Activated CD4-positive, alpha-beta memory T cell treated with anti-CD3 and anti-CD28 coated beads for 36 hours (primary cell): ENCODE measurements at regions of chr14 and their contacts with region 1.

Region 1: DNA sequence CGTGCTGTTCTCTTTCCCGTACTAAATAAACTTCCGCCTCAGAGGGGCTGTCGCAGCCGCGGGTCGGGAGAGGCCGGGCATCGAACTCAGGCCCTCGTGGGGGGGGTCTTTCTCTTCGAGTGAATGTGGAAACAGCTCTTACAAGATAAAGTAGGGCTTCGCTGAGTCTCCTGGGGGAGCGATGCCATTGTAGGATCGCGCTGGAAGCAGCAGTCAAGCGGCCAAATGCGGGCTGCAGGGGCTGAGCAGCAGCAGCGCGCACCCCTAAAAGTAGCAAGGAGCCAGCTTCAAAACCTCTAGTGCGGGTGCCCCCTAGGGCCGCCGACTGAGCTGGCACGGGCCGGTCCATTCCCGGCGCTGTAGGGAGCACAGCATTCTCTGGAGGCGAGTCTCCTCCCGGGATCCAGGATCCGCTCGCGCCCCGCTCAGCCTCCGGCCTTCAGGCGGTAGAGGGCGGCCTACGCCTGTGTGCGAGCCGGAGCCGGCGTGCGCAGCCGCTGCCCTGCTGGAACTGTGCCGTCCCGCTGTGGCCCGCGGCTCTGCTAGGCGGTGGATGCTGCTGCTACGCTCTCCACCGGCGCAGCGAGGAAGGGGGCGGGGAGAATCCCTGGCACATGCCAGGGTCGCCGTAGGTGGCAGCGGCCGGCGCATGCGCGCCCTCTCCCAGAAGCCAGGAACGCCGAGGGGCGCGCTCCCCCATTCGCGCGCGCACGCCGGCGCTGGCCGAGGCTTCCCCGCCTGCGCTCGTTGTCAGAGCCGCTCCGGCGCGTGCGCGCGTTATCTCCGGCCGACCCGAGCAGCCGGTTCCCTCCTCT is at the start of gene FUT8:
- DNase-seq: peak; percentile 96
- H3K4me3 Mint-ChIP-seq: peak within 1 kb of the TSS; percentile 98
- H3K27ac Mint-ChIP-seq: peak within 1 kb of the TSS; percentile 96
- H3K4me1 Mint-ChIP-seq: peaks cover 34% of the 10 kb centered on the region
- H3K27me3 Mint-ChIP-seq: no peaks in the 10 kb centered on the region
- total RNA-seq, gene FUT8: 50.7 to 51.4 TPM

Region 2: DNA sequence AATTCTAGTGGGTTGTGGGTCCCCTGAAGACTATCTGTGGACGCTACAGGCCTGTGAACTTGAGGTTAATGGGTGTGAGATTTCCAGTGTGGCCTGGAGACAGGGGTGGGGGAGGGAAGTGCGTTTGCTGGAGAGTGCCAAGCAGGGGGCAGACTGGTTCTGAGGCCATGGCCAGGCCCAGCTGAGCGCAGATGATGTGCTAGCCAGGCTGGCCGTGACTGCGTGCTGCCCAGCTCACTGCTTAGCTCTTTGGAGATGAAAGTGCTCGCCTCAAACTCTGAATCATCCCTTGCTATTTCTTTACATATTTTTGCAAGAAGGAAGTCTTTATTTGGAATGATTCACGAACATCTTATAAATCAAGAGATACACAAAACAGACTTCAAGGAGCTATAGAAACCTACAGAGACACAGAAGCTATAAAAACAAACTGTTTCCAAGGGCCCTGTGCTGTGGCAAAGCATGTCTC is 783.3 kb before region 1 on chr14:
- CTCF ChIA-PET with region 1: no interaction called
- POLR2A ChIA-PET with region 1: no interaction called
- intact Hi-C with region 1: no loop called
- DNase-seq: no peak
- H3K4me3 Mint-ChIP-seq: no peak overlapping the region
- H3K27ac Mint-ChIP-seq: no peak overlapping the region
- H3K4me1 Mint-ChIP-seq: no peaks in the 10 kb centered on the region
- H3K27me3 Mint-ChIP-seq: no peaks in the 10 kb centered on the region

Region 3: DNA sequence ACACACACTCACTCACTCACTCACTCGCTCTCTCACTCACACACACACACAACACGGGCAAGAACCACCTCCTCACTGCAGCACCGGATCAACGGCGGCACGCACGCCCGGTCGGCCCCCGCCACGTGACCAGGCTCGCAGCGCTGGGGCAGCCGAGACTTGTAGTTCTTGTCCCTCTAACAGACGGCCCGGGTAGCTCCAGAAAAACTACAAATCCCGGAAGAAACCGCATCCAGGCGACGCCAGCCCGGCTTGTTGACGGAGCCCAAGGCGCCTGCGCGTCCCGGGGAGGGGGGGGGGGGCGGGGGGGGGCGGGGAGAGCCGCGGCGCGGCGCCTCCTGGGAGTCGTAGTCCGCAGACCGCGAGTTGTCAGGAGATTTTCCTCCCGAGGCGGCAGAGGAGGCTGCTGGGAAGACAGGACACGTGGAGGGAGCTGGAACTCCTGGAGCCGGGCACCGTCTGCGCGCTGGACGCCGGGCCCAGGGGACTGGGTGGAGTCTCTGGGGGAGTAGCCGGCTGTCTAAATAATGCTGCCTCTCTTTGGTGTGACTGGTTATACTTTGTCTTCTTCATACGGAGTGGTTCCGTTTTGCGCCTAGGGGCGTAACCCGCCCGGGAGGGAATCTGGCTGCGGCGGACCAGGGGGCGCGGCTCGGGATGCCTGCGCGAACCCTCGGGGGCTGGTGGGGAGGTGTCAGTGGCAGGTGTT is 309.6 kb before region 1 on chr14 and contains the start of gene MAX:
- CTCF ChIA-PET with region 1: interaction called, 3 read pairs
- POLR2A ChIA-PET with region 1: no interaction called
- intact Hi-C with region 1: loop called (anchors 1 kb)
- DNase-seq: peak; percentile 99
- H3K4me3 Mint-ChIP-seq: peak within 1 kb of the TSS; percentile 96
- H3K27ac Mint-ChIP-seq: peak within 1 kb of the TSS; percentile 93
- H3K4me1 Mint-ChIP-seq: peaks cover 34% of the 10 kb centered on the region
- H3K27me3 Mint-ChIP-seq: no peaks in the 10 kb centered on the region
- total RNA-seq, gene MAX: 74.5 to 80.7 TPM

Region 4: DNA sequence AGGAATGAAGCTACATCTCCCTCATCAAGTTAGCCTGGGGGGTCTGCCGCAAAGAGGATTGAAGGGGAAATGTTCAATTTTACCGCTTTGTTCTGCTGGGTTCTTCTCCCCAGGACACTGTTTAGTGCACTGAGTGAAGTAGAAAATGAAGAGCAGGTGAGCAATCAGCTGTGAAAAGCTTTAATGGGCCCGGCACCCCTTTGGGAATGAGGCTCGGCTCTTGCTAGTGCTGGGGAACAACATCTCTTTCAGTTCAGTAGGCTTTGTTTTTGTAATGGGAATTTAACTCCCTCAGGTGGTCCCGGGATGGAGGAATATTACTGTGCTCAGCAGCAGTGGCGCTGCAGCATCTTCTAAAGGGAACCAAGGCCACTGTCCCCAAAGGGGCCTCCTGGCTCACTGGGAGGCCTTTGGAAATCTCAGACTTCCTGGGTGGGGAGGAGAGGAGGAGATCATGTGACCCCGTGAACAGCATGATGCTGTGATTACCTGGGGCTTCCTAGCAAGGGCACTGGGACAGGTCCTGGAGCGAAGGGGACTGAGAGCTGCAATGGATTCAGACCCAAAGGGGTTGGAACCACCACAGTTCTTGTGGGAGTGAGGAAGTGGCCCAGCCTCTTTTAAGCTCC is 224.7 kb before region 1 on chr14:
- CTCF ChIA-PET with region 1: no interaction called
- POLR2A ChIA-PET with region 1: no interaction called
- intact Hi-C with region 1: no loop called
- DNase-seq: no peak
- H3K4me3 Mint-ChIP-seq: no peak overlapping the region
- H3K27ac Mint-ChIP-seq: no peak overlapping the region
- H3K4me1 Mint-ChIP-seq: peaks cover 2% of the 10 kb centered on the region
- H3K27me3 Mint-ChIP-seq: peaks cover 4% of the 10 kb centered on the region

Region 5: DNA sequence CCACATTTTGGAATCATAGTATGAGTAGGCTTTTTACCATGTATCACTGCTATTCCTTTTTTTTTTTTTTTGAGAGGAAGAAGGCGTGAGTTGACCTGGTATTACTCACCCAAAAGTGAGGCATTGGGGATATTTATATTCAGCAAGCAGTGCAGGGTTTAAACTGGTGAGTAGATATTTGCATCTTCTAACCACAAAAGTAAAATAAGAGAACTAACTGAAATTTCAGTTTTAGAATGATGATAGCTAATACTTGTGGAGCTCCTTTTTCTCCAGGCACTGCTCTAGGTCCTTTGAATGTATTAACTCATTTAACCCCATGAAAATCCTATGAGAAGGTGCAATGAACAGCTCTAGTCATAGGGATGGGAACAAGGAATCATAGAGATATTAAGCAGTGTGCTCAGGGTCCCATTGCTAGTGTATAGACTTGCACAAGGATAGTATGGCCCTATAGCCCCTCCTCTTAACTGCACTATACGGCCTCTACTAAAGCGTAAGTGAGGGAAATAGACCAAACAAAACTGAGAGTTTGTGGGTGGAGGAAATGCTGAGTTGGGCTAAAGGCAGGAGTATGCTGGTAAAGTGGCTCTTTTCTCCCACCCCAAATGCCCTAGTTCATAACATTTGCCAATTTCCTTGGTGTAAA is 205.7 kb before region 1 on chr14:
- CTCF ChIA-PET with region 1: interaction called, 5 read pairs
- POLR2A ChIA-PET with region 1: interaction called, 4 read pairs
- intact Hi-C with region 1: loop called (anchors 1 kb)
- DNase-seq: peak; percentile 35
- H3K4me3 Mint-ChIP-seq: peak overlapping the region; percentile 54
- H3K27ac Mint-ChIP-seq: peak overlapping the region; percentile 82
- H3K4me1 Mint-ChIP-seq: peaks cover 61% of the 10 kb centered on the region
- H3K27me3 Mint-ChIP-seq: peaks cover 2% of the 10 kb centered on the region

Region 6: GRCh38 chr14:65302571-65303189 is 109.6 kb before region 1 on chr14:
- CTCF ChIA-PET with region 1: no interaction called
- POLR2A ChIA-PET with region 1: no interaction called
- intact Hi-C with region 1: loop called (anchors 5 kb)
- DNase-seq: peak; percentile 87
- H3K4me3 Mint-ChIP-seq: peak overlapping the region; percentile 40
- H3K27ac Mint-ChIP-seq: peak overlapping the region; percentile 87
- H3K4me1 Mint-ChIP-seq: peaks cover 45% of the 10 kb centered on the region
- H3K27me3 Mint-ChIP-seq: no peaks in the 10 kb centered on the region

Region 7: DNA sequence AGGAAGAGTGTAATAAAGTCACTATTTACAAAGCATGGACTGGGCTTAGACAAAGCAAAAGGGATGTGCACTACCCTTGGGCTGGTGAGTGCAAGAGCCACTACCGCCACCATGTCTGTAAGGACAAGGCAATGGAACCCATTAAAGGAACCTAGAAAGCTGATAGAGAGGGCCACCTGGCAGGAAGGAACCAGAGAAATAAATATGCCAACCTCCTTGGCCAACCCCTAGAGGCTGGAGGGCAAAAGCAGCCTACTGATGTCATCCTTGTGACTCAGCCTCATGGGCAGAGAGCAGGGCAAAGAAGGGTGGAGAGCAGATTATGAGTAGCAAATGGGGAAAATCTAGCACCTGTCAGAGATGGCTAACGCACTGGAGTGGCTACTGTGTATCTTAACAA is 59.2 kb before region 1 on chr14:
- CTCF ChIA-PET with region 1: no interaction called
- POLR2A ChIA-PET with region 1: no interaction called
- intact Hi-C with region 1: no loop called
- DNase-seq: peak; percentile 44
- H3K4me3 Mint-ChIP-seq: no peak overlapping the region
- H3K27ac Mint-ChIP-seq: no peak overlapping the region
- H3K4me1 Mint-ChIP-seq: peaks cover 30% of the 10 kb centered on the region
- H3K27me3 Mint-ChIP-seq: no peaks in the 10 kb centered on the region

Region 8: GRCh38 chr14:65501328-65501727 is 89.1 kb after region 1 on chr14:
- CTCF ChIA-PET with region 1: interaction called, 10 read pairs
- POLR2A ChIA-PET with region 1: no interaction called
- intact Hi-C with region 1: no loop called
- DNase-seq: no peak
- H3K4me3 Mint-ChIP-seq: no peak overlapping the region
- H3K27ac Mint-ChIP-seq: no peak overlapping the region
- H3K4me1 Mint-ChIP-seq: peaks cover 46% of the 10 kb centered on the region
- H3K27me3 Mint-ChIP-seq: no peaks in the 10 kb centered on the region

Region 9: DNA sequence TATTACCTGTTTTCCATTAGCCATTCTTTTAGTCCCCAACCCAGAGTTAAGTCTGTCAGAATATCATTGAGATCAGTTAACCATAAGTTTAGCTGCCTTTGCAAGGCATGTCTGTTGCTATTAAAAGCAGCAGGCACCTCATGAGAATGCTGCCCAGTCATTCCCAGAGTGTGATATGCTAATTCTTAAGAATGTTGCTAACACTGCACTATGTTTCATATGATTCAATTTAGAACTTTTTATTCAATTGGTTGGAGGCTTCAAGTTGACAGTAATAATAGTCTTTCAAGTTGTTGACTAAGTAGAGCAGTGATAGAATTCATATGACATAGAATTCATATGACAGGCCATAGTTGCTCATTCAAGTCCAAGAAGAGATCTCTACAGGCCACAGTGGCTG is 292.6 kb after region 1 on chr14:
- CTCF ChIA-PET with region 1: interaction called, 4 read pairs
- POLR2A ChIA-PET with region 1: no interaction called
- intact Hi-C with region 1: loop called (anchors 5 kb)
- DNase-seq: peak; percentile 66
- H3K4me3 Mint-ChIP-seq: no peak overlapping the region
- H3K27ac Mint-ChIP-seq: peak overlapping the region; percentile 64
- H3K4me1 Mint-ChIP-seq: peaks cover 31% of the 10 kb centered on the region
- H3K27me3 Mint-ChIP-seq: no peaks in the 10 kb centered on the region

Region 10: GRCh38 chr14:65958664-65959562 is 546.7 kb after region 1 on chr14:
- CTCF ChIA-PET with region 1: interaction called, 31 read pairs
- POLR2A ChIA-PET with region 1: no interaction called
- intact Hi-C with region 1: loop called (anchors 2 kb)
- DNase-seq: no peak
- H3K4me3 Mint-ChIP-seq: no peak overlapping the region
- H3K27ac Mint-ChIP-seq: no peak overlapping the region
- H3K4me1 Mint-ChIP-seq: peaks cover 16% of the 10 kb centered on the region
- H3K27me3 Mint-ChIP-seq: peaks cover 1% of the 10 kb centered on the region

Region 11: DNA sequence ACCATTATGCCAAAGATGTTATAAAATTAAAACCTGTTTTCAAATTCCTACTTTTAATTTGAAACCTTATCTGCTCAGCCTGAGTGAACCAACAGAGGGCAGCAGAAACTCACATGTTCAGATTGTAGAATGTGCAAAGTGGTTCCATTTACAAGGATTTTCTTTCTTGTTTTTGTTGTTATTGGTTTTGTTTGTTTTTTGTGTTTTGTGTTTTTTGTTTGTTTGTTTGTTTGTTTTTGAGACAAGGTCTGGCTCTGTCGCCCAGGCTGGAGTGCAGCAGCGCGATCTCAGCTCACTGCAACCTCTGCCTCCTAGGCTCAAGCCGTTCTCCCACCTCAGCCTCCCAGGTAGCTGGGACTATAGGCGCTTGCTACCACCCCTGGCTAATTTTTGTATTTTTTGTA is 1754.2 kb after region 1 on chr14:
- CTCF ChIA-PET with region 1: no interaction called
- POLR2A ChIA-PET with region 1: no interaction called
- intact Hi-C with region 1: no loop called
- DNase-seq: peak; percentile 35
- H3K4me3 Mint-ChIP-seq: no peak overlapping the region
- H3K27ac Mint-ChIP-seq: no peak overlapping the region
- H3K4me1 Mint-ChIP-seq: peaks cover 2% of the 10 kb centered on the region
- H3K27me3 Mint-ChIP-seq: no peaks in the 10 kb centered on the region